ENCODE measurements at regions of chr11 and their contacts with region 1.

Region 1: GRCh38 chr11:64652586-64653387 is 61.8 kb downstream of the SLC22A12 start:
- DNase-seq: peak; percentile 87

Region 2: DNA sequence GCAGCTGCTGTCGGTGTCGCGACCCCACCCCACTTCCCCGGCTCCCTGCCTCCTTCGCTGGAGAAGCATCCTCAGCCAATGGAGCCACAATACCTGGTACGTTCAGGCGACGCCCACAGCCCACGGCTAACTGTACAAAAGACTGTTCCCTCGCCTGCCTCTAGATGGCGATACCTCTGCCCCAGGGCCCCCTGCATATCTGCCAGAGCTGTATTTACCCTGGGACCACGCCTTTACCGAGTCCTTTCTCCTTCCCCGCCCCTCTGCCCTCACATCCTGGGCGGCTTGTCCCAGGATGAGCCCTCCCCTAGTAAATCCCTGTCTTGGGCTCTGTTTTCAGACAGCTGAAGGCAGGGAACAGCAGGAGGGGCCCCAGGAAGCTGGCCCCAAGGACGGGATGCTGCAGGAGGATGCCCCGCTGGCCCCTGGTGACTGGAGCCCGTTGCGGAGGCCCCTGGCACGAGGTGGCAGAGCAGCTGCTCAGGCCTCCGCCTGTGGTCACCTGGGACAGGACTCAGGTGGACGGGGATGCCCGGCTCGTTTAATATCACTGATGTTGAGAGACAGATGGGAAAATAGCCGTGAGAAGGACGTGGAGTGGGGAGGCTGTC is 203.1 kb before region 1 on chr11:
- intact Hi-C with region 1: loop called (anchors 5 kb)
- DNase-seq: peak; percentile 81

Region 3: DNA sequence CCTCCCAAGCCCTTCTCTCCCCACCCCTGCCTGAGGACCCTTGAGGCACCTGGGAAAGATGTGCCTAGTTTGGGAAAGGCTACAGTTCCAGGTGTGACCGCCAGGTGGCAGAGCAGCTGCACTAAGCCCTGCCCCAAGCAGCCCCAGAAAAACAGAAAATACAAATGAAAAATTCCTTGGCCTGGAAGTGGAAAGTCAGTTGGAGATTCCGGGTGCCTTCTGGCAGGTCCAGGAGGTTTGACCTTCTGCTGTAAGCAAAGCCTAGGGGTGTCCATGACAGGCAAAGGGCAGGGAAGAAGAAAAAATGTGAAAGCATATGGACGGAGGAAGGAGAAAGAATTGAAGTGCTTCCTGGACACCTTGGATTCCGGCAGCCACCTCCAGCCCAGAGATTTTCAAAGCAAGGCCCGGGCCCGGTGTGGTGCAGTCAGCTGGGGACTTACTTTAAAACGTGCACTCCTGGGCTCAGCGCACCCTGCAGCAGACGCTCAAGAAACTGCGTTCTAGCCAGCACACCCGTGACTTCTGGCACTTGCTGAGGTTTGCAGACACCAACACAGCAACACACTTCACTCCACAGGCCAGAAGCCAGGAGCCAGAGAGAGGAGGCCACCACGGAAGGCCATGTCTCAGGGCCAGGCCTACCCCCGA is 99.1 kb before region 1 on chr11:
- intact Hi-C with region 1: loop called (anchors 1 kb)
- DNase-seq: no peak

Region 4: GRCh38 chr11:64924102-64924851 is 271.5 kb after region 1 on chr11 and contains the start of gene PPP2R5B:
- intact Hi-C with region 1: no loop called
- DNase-seq: peak; percentile 96
- total RNA-seq, gene PPP2R5B: 24.9 TPM